Esophagus squamous epithelium (tissue), 5 donors: ENCODE measurements at regions of chr21 and their contacts with region 1.

Region 1: GRCh38 chr21:27713154-27714109 is 746.5 kb upstream of the ADAMTS5 start:
- DNase-seq: no peak
- H3K4me3 ChIP-seq: no peak overlapping the region
- H3K27ac ChIP-seq: no peak overlapping the region
- H3K4me1 ChIP-seq: peaks cover 0 to 11% (median 0%) of the 10 kb centered on the region in 3 donors
- H3K27me3 ChIP-seq: no peaks in the 10 kb centered on the region
- CTCF ChIP-seq: no peak
- POLR2A ChIP-seq: no peak

Region 2: DNA sequence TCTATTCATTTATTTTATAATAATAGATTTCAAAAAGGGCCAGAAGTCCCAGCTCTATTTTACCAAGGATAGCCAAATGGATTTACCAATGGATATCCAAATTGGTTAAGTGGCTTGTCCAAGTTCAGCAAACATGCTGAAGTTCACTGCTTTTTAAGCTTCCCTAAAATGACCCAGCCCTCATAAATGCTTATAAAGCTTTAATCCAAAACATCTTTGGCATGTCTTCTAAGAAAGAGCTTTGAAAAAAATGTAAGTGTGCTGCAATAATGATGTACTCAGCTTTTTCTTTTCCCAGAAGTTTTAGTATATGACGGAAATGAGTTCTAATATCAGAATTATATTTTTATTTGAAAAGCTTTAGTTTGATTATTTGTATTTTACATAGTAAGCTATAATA is 295.1 kb before region 1 on chr21:
- intact Hi-C with region 1: no loop called
- DNase-seq: no peak
- H3K4me3 ChIP-seq: no peak overlapping the region
- H3K27ac ChIP-seq: peak overlapping the region in 1 of 4 donors; percentile 22
- H3K4me1 ChIP-seq: peaks cover 0 to 11% (median 0%) of the 10 kb centered on the region in 3 donors
- H3K27me3 ChIP-seq: no peaks in the 10 kb centered on the region
- CTCF ChIP-seq: no peak
- POLR2A ChIP-seq: no peak

Region 3: DNA sequence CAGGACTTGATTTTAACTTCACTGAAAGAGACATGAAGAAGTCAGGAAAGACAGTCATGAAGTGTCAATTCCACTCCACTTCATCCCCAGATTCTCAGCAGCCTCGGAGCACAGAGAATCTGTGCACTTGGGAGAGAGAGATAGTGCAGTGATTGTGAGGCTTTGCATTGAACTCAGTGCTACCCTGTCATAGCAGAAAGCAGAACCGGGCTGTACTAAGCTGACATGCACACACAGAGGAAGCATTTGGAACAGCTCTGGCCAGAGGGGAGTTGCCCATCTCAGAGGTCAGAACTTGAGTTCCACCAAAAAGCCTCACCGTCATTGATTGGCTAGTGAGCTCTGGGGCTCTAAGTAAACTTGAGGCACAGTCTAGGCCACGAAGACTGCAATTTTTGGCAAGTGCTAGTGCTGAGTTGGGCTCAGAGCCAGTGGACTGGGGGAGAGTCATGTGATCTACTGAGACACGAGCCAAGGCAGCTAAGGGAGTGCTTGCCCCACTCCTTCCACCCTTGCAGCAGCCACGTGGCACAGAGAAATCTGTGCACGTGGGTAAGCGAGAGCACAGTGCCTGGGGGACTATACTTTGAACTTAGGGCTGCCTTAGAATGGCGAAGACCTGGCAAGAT is 63.6 kb after region 1 on chr21:
- intact Hi-C with region 1: no loop called
- DNase-seq: no peak
- H3K4me3 ChIP-seq: no peak overlapping the region
- H3K27ac ChIP-seq: no peak overlapping the region
- H3K4me1 ChIP-seq: no peaks in the 10 kb centered on the region
- H3K27me3 ChIP-seq: no peaks in the 10 kb centered on the region
- CTCF ChIP-seq: no peak
- POLR2A ChIP-seq: no peak

Region 4: DNA sequence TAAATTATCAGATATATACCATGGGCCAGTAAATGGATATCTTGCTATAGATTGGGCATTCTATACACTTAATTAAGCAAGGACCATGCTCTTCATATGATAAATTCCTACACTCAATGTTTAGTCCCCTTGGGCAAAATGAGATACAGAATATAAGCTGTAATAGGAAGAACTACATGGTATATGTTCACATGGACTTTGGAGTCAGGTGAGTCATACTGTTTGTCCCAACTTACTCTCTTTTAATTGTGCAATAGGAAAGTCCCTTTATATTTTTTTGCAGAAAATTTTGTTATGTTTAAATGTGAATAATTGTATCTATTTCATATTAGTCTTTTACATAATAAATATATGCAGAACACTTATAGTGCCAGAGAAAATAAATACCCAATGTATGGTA is 73.6 kb after region 1 on chr21:
- intact Hi-C with region 1: no loop called
- DNase-seq: no peak
- H3K4me3 ChIP-seq: no peak overlapping the region
- H3K27ac ChIP-seq: no peak overlapping the region
- H3K4me1 ChIP-seq: no peaks in the 10 kb centered on the region
- H3K27me3 ChIP-seq: no peaks in the 10 kb centered on the region
- CTCF ChIP-seq: no peak
- POLR2A ChIP-seq: no peak

Region 5: DNA sequence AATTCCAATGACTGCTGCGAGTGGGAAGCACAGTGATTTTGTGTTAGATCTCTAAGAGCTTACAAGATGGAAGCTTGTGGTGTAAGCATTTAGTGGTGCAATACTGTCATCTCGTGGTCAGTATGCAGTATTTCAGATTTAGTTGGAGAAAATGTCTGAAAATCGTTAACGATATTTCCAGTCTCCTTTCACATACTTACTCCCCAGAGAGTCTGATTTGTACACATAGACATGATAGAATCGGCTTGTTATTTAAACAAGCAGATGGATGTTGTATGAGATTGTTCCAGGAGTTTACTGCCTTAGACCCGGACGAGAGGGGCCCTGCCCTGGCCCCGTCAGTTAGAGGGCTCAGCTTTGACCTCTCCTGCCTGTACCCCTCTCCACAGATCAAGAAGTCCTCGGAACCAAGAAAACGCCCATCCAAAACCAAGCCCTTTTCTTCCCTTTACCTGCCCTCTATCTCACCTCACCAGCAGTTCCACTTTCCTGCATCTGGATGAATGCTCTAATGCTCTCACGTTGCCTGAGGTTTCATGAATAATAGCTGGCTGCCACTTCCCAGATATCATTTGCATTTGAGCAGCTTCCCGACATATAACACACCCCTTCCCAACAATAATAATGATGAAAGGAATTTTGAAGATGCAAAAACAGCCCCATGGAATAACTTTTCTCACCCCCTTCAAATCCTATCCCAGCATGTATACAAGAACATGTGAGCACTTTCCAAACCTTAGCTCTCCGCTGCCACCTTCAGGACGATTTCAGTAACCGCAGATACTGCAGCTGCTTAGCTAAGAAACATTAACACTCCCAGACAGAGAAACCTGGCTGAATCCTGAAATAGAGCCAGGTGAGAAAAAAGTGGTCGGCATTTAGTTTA is 1031.9 kb after region 1 on chr21:
- intact Hi-C with region 1: loop called (anchors 10 kb)
- DNase-seq: no peak
- H3K4me3 ChIP-seq: peak overlapping the region; percentile 29 to 61 (median 49)
- H3K27ac ChIP-seq: peak overlapping the region; percentile 45 to 84 (median 80)
- H3K4me1 ChIP-seq: peaks cover 0 to 34% (median 8%) of the 10 kb centered on the region in 3 donors
- H3K27me3 ChIP-seq: no peaks in the 10 kb centered on the region
- CTCF ChIP-seq: peak; percentile 77 to 99 (median 90)
- POLR2A ChIP-seq: no peak